IMR-90 (cell line): ENCODE measurements at regions of chr17 and their contacts with region 1.

Region 1: DNA sequence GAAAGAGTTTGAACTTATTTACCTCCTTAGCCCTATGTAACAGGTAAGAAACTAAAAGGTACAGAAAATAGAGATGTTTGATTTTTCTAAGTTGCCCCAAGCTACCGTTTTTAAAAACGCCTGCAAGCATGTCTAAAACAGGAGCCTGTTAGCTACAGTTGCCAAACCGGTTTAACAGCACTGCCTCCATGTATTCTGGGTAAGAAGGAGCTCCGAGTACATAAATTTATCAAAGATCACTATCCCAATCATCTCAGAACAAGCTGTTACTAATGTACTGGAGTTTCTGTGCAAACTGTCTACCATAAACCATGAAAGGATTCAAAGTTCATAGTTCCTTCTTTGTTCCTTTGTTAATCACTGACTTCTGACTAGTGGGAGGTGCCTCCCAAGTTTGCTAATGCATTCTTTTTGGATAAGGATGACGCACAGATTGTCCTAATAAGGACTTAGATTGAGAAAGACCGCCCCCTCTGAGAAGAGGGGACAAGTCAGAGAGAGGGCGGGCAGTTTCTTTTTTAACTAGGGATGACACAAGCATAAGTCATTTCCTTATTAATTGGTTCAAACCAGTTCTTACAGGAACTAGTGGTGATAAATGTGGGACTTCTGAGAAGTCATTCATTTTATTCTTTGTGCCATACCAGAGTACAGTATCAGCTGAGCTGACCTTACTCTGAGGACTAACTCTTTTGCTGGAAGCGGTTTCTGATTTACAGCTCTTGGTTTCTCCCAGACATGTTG is 55.3 kb downstream of the TUBD1 start:
- DNase-seq: peak; percentile 100
- ATAC-seq: peak; percentile 86
- H3K4me3 ChIP-seq: peak overlapping the region; percentile 83
- H3K27ac ChIP-seq: peak overlapping the region; percentile 96
- H3K4me1 ChIP-seq: 0 out of 2 replicates have a peak, but pooled peaks cover 2% of the 10 kb centered on the region
- H3K27me3 ChIP-seq: no peaks in the 10 kb centered on the region
- CTCF ChIP-seq: no peak
- POLR2A ChIP-seq: peak; percentile 99
- RAD21 ChIP-seq: peak; percentile 14; the same call in 1 of the 2 replicates

Region 2: DNA sequence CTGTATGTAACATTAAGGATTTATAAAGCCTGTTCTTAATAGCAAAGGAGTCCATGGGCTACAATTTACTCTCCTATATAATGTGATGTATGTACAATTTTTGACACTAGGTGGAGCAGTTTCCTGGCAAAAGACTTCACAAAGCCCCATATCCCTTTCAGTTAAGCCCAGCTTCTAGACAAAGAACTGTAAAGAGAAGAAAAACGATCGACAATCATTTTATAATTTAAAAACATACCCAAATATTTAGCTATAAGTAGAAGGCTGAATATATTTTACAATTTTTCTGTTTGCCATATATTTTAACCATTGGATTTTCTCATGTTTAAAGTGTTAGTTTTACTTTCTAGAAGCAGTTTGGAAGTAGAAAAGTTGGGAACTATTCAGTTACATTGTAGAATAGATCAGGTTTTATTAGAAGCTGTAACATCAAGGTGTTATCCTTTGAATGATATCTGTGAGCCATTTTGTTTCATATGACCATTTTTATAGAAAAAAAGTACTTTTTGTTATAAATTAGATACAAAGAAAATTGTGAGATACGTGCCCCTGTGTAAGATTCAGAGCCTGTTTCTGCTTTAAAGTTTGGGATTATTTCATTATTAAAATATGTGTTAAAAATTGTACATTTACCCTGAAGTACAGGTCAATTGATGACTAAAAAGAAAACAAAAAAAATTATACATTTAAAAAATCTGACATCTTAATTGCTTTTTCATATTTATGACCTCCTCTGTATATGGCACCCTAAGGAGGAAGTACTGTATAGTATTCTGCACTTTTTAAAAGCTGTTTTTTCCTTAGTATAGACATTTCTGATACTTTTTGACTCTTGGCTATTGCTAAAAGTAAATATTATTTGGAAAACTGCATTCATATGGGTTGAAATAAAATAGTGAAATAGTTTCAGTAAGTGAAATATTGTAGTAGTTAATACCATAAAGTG is 83.7 kb before region 1 on chr17:
- CTCF ChIA-PET with region 1: interaction called, 6 read pairs
- POLR2A ChIA-PET with region 1: interaction called, 87 read pairs
- dilution Hi-C with region 1: no loop called
- in situ Hi-C with region 1: no loop called
- intact Hi-C with region 1: loop called (anchors 1 kb)
- DNase-seq: peak; percentile 93
- ATAC-seq: peak; percentile 74
- H3K4me3 ChIP-seq: no peak overlapping the region
- H3K27ac ChIP-seq: peak overlapping the region; percentile 78; the same call in 1 of the 2 replicates
- H3K4me1 ChIP-seq: peaks cover 14% of the 10 kb centered on the region
- H3K27me3 ChIP-seq: no peaks in the 10 kb centered on the region
- CTCF ChIP-seq: peak; percentile 81
- POLR2A ChIP-seq: peak; percentile 40; the same call in 1 of the 2 replicates
- RAD21 ChIP-seq: peak; percentile 94

Region 3: DNA sequence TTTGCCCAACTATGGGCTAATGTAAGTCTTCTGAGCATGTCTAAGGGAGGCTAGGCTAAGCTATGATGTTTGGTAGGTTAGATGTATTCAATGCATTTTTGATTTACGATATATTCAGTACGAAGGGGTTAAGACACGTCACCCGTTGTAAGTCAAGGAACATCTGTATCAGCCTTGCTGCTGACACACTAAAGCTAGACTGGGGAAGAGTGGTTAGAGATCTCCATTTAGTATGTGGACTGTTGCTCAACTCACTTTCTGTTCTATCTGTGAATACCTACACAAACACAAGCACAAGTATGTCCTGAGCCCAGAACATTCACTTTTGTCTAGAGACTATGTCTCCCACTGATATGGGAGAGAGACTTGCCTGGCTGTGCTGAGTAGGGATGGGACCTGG is 58.5 kb before region 1 on chr17:
- CTCF ChIA-PET with region 1: no interaction called
- POLR2A ChIA-PET with region 1: interaction called, 14 read pairs
- dilution Hi-C with region 1: no loop called
- in situ Hi-C with region 1: no loop called
- intact Hi-C with region 1: no loop called
- DNase-seq: no peak
- ATAC-seq: no peak
- H3K4me3 ChIP-seq: no peak overlapping the region
- H3K27ac ChIP-seq: no peak overlapping the region
- H3K4me1 ChIP-seq: peaks cover 11% of the 10 kb centered on the region
- H3K27me3 ChIP-seq: no peaks in the 10 kb centered on the region
- CTCF ChIP-seq: no peak
- POLR2A ChIP-seq: no peak
- RAD21 ChIP-seq: no peak

Region 4: GRCh38 chr17:59796785-59797205 is 40.7 kb before region 1 on chr17:
- CTCF ChIA-PET with region 1: no interaction called
- POLR2A ChIA-PET with region 1: interaction called, 34 read pairs
- dilution Hi-C with region 1: no loop called
- in situ Hi-C with region 1: no loop called
- intact Hi-C with region 1: no loop called
- DNase-seq: no peak
- ATAC-seq: peak; percentile 66
- H3K4me3 ChIP-seq: no peak overlapping the region
- H3K27ac ChIP-seq: peak overlapping the region; percentile 59
- H3K4me1 ChIP-seq: peaks cover 9% of the 10 kb centered on the region
- H3K27me3 ChIP-seq: no peaks in the 10 kb centered on the region
- CTCF ChIP-seq: no peak
- POLR2A ChIP-seq: no peak
- RAD21 ChIP-seq: no peak

Region 5: GRCh38 chr17:59815965-59816364 is 21.5 kb before region 1 on chr17:
- CTCF ChIA-PET with region 1: no interaction called
- POLR2A ChIA-PET with region 1: interaction called, 22 read pairs
- dilution Hi-C with region 1: no loop called
- in situ Hi-C with region 1: no loop called
- intact Hi-C with region 1: no loop called
- DNase-seq: no peak
- ATAC-seq: 0 out of 2 replicates have a peak, but pooled peaks have one; percentile 17
- H3K4me3 ChIP-seq: no peak overlapping the region
- H3K27ac ChIP-seq: no peak overlapping the region
- H3K4me1 ChIP-seq: peaks cover 6% of the 10 kb centered on the region
- H3K27me3 ChIP-seq: no peaks in the 10 kb centered on the region
- CTCF ChIP-seq: no peak
- POLR2A ChIP-seq: no peak
- RAD21 ChIP-seq: no peak

Region 6: GRCh38 chr17:59918975-59919530 is 81.6 kb after region 1 on chr17:
- CTCF ChIA-PET with region 1: no interaction called
- POLR2A ChIA-PET with region 1: no interaction called
- dilution Hi-C with region 1: no loop called
- in situ Hi-C with region 1: no loop called
- intact Hi-C with region 1: no loop called
- DNase-seq: no peak
- ATAC-seq: no peak
- H3K4me3 ChIP-seq: no peak overlapping the region
- H3K27ac ChIP-seq: no peak overlapping the region
- H3K4me1 ChIP-seq: no peaks in the 10 kb centered on the region
- H3K27me3 ChIP-seq: no peaks in the 10 kb centered on the region
- CTCF ChIP-seq: no peak
- POLR2A ChIP-seq: no peak
- RAD21 ChIP-seq: no peak

Region 7: DNA sequence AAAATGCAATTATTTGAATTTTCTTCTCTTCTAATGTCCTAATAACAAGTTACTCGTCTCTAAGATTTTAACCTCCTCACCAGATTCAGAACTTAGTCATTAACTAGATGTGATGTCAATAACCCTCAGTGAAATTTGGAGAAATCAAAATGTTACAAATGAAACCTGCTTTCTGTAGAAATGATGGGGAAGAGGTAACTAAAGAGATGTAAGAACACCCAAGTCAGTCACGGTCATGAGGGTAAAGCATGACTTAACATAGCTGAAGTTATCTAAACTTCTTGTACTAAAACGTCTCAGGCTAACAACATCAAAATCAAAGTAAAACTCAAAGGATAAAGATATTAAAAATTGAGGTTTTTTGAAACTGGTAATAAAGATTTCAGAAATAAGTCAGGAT is 117.4 kb after region 1 on chr17:
- CTCF ChIA-PET with region 1: no interaction called
- POLR2A ChIA-PET with region 1: no interaction called
- dilution Hi-C with region 1: no loop called
- in situ Hi-C with region 1: no loop called
- intact Hi-C with region 1: no loop called
- DNase-seq: no peak
- ATAC-seq: no peak
- H3K4me3 ChIP-seq: no peak overlapping the region
- H3K27ac ChIP-seq: no peak overlapping the region
- H3K4me1 ChIP-seq: no peaks in the 10 kb centered on the region
- H3K27me3 ChIP-seq: no peaks in the 10 kb centered on the region
- CTCF ChIP-seq: no peak
- POLR2A ChIP-seq: no peak
- RAD21 ChIP-seq: no peak

Region 8: DNA sequence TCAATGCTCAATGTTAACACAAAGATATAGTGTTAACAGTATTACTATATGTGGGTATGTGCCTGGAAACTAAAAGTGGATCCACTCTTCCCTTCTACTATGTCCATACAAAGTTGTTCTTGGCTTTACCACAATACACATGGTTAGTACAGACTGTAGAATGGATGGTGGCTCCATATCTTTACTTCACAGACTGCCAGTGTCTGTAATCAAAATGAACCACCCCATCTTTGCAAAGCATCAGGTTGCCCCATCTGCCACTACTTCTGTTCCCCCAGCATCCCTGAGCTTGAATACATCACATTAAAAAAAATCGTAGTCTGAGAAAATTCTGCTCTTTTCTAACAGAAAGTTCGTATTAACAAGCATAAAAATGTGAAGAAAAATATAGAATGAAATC is 524.4 kb after region 1 on chr17:
- CTCF ChIA-PET with region 1: no interaction called
- POLR2A ChIA-PET with region 1: no interaction called
- dilution Hi-C with region 1: no loop called
- in situ Hi-C with region 1: no loop called
- intact Hi-C with region 1: no loop called
- DNase-seq: no peak
- ATAC-seq: peak; percentile 56
- H3K4me3 ChIP-seq: no peak overlapping the region
- H3K27ac ChIP-seq: peak overlapping the region; percentile 83; the same call in 1 of the 2 replicates
- H3K4me1 ChIP-seq: peaks cover 8% of the 10 kb centered on the region
- H3K27me3 ChIP-seq: no peaks in the 10 kb centered on the region
- CTCF ChIP-seq: no peak
- POLR2A ChIP-seq: no peak
- RAD21 ChIP-seq: no peak